HepG2 (cell line): ENCODE measurements at regions of chr18 and their contacts with region 1.

Region 1: DNA sequence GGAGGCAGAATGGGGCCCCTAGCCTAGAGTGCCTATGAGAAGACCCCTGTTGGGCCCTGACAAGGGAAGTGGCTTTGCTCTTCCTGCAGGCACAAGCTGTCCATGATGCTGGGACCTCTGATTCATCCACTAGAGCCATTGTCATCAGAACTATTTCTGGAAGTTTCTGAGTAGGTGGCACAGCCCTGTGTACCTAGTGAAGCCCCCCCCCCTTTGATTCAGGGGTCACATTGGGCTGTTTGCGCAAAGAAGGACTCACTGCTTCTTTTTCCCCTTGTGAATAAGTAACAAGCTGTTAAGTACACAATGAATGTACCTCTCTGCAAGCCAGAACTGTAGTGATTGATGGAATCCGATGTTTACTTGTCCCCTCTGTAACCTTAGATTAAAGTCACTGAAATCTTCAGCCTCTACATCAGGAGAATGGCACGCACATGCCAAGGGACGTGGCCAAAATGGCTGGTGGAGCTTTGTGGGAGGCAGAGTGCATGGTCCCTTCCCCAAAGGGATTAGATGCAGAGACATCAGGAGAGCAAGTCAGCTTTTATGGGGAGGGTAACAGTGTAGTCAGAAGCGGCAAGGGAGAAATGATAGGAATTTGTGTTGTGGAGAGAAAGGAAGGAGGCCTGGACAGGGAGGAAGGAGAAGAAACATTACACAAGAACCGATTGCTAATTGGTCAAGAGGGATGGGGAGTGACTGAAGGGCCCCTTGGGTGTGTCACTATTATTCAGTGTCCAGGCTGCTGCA is 267.6 kb upstream of the RAB12 start:
- DNase-seq: peak; percentile 97
- ATAC-seq: peak; percentile 97
- H3K4me3 ChIP-seq: peak overlapping the region in 1 of 3 experiments; percentile 13; a peak in 2 of 6 replicates
- H3K27ac ChIP-seq: peak overlapping the region; percentile 80
- H3K4me1 ChIP-seq: peaks cover 49% of the 10 kb centered on the region
- H3K27me3 ChIP-seq: no peaks in the 10 kb centered on the region
- CTCF ChIP-seq: no peak
- EP300 ChIP-seq: peak in 1 of 2 experiments; percentile 86; a peak in 3 of 4 replicates
- POLR2A ChIP-seq: peak in 1 of 2 experiments; percentile 55; a peak in 2 of 4 replicates
- RAD21 ChIP-seq: peak; percentile 25; the same call in 1 of the 2 replicates

Region 2: DNA sequence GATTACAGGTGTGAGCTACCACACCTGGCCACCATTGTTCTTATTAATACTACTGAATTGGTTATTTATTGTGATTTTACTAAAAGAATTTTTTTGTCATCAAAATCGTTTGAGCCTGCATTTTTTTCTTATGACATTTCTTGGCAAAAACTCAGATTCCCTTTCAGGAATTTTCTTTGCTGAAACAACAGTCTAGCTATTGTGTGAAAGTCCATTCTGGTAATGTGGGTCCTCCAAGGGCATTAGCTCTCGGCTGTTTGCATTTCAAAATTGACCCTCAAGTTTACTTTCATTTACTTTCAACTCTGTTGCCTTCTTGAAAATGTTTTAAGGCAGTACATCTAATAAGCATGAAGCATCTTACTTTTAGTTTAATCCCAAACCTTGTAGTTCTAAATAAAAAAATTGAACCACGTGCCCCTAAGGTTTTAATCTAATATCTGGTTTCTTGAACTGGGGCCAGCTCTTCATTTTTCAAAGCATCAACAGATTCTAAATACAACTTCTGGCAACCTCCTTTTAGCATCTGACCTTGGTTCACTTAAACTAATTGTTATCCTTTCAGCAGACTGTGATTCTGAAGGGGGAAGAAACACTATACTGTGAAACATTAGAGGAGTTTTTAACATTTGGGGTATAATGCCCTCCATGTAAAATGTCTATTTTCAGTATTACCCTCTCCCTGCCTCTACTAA is 57.6 kb before region 1 on chr18:
- CTCF ChIA-PET with region 1: no interaction called
- POLR2A ChIA-PET with region 1: no interaction called
- in situ Hi-C with region 1: no loop called
- intact Hi-C with region 1: loop called (anchors 5 kb)
- DNase-seq: peak; percentile 78
- ATAC-seq: peak; percentile 73
- H3K4me3 ChIP-seq: no peak overlapping the region
- H3K27ac ChIP-seq: no peak overlapping the region
- H3K4me1 ChIP-seq: peaks cover 12% of the 10 kb centered on the region
- H3K27me3 ChIP-seq: no peaks in the 10 kb centered on the region
- CTCF ChIP-seq: no peak
- EP300 ChIP-seq: peak in 1 of 2 experiments; percentile 45; a peak in 1 of 4 replicates
- POLR2A ChIP-seq: no peak
- RAD21 ChIP-seq: no peak